SK-N-SH (cell line): ENCODE measurements at regions of chr5 and their contacts with region 1.

Region 1: GRCh38 chr5:9166202-9167112 is 379.4 kb downstream of the SEMA5A start:
- DNase-seq: no peak
- H3K4me3 ChIP-seq: no peak overlapping the region
- H3K27ac ChIP-seq: no peak overlapping the region
- H3K4me1 ChIP-seq: peaks cover 0 to 2% of the 10 kb centered on the region in 2 experiments; a peak in 2 of 4 replicates
- H3K27me3 ChIP-seq: no peaks in the 10 kb centered on the region
- CTCF ChIP-seq: no peak
- EP300 ChIP-seq: no peak
- RAD21 ChIP-seq: no peak

Region 2: DNA sequence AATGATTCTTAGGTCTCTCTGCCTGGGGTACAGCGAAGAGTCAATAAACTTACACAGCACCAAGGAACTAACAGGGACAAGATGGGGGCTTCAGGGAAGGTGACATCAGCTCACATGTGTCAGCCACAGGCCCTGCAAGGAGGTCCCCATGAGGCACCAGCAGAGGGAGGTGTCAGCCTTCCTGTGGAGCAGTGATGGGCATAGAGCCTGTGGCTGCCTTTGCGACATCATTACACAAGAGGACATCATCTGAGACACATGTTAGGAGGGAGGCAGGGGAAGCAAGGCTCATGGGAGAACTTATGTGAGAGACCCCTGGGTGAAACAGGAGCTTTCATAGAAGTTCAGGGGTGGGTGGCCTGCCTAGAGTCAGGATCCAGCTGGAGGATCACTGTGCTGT is 10.2 kb before region 1 on chr5:
- CTCF ChIA-PET with region 1: interaction called, 11 read pairs
- POLR2A ChIA-PET with region 1: no interaction called
- DNase-seq: peak; percentile 50
- H3K4me3 ChIP-seq: no peak overlapping the region
- H3K27ac ChIP-seq: no peak overlapping the region
- H3K4me1 ChIP-seq: no peaks in the 10 kb centered on the region; a peak in 1 of 4 replicates
- H3K27me3 ChIP-seq: no peaks in the 10 kb centered on the region
- CTCF ChIP-seq: peak; percentile 44
- EP300 ChIP-seq: no peak
- RAD21 ChIP-seq: peak; percentile 82